MCF 10A (cell line): ENCODE measurements at regions of chr10 and their contacts with region 1.

Region 1: DNA sequence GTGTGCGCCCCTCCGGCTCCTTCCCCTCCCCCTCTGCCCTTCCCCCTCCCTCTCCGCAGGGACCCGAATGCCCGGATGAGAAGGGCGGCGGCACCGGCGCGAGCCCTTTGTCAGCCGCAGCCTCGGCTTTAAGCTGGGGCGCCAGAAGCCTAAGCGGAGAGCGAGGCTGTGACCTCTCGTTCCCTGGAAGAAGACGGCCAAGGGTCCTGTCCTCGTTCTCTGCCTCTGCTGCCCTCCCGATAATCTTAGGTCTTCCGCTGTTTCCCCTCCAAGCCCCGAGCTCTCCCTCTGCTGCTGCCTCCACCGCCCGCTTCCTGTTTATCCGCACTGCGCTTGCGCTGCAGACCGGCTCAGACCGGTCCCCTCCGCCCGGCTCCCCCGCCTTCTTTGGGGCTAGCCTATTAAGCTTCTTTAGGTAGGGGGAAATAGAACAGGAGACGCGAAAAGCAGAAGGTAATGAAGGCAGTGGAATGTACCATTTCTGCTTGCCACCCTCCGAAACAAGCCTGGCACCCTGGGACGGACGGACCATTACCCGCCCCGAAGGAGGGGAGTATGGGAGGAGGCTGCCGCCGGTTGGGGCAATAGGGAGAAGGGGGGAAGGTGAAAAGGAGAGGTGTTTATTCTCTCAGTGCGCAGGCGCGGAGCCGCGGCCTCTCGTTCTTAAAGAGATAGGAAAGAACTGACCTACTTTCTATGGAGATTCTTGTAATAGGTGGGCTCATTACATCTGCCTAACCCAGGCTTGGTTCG is at the start of gene OGA:
- DNase-seq: peak; percentile 99
- H3K4me3 Mint-ChIP-seq: peak within 1 kb of the TSS; percentile 84
- H3K27ac Mint-ChIP-seq: peak within 1 kb of the TSS; percentile 89
- H3K4me1 Mint-ChIP-seq: peaks cover 16% of the 10 kb centered on the region
- H3K27me3 Mint-ChIP-seq: no peaks in the 10 kb centered on the region
- CTCF ChIP-seq: no peak
- total RNA-seq, gene OGA: 96.1 and 115 TPM in 2 replicates

Region 2: GRCh38 chr10:101782811-101783735 is 35.2 kb before region 1 on chr10 and contains the start of gene NPM3:
- CTCF ChIA-PET with region 1: interaction called, 7 read pairs
- POLR2A ChIA-PET with region 1: interaction called, 56 read pairs
- intact Hi-C with region 1: no loop called
- DNase-seq: peak; percentile 83
- H3K4me3 Mint-ChIP-seq: peak within 1 kb of the TSS; percentile 100
- H3K27ac Mint-ChIP-seq: peak within 1 kb of the TSS; percentile 98
- H3K4me1 Mint-ChIP-seq: peaks cover 28% of the 10 kb centered on the region
- H3K27me3 Mint-ChIP-seq: no peaks in the 10 kb centered on the region
- CTCF ChIP-seq: no peak
- total RNA-seq, gene NPM3: 120 and 163 TPM in 2 replicates

Region 3: DNA sequence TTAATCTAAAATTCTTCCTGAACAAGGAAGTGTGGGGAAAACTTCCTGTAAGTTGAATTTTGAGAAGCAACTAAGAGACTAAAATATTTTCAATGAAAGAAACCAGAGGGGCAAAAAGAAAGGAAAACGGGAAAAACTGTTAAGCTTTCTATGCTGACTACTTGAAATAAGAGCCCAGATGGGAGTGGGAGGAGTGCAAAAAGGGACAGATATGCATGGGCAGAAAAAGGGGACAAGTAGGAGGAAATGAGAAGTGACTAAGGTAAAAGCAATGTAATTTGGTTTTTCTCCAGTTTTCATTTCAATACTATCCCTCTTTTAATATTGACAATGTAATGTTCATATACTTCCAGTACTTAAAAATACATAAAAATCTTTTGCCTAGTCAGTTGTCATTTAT is 11.1 kb before region 1 on chr10:
- CTCF ChIA-PET with region 1: no interaction called
- POLR2A ChIA-PET with region 1: interaction called, 23 read pairs
- intact Hi-C with region 1: no loop called
- DNase-seq: no peak
- H3K4me3 Mint-ChIP-seq: no peak overlapping the region
- H3K27ac Mint-ChIP-seq: no peak overlapping the region
- H3K4me1 Mint-ChIP-seq: no peaks in the 10 kb centered on the region
- H3K27me3 Mint-ChIP-seq: no peaks in the 10 kb centered on the region
- CTCF ChIP-seq: no peak

Region 4: GRCh38 chr10:101840741-101841453 is 22.6 kb after region 1 on chr10:
- CTCF ChIA-PET with region 1: interaction called, 16 read pairs
- POLR2A ChIA-PET with region 1: interaction called, 16 read pairs
- intact Hi-C with region 1: no loop called
- DNase-seq: peak; percentile 79
- H3K4me3 Mint-ChIP-seq: peak overlapping the region; percentile 57
- H3K27ac Mint-ChIP-seq: no peak overlapping the region
- H3K4me1 Mint-ChIP-seq: peaks cover 15% of the 10 kb centered on the region
- H3K27me3 Mint-ChIP-seq: no peaks in the 10 kb centered on the region
- CTCF ChIP-seq: peak; percentile 85

Region 5: GRCh38 chr10:101879456-101880231 is 61.3 kb after region 1 on chr10:
- CTCF ChIA-PET with region 1: no interaction called
- POLR2A ChIA-PET with region 1: no interaction called
- intact Hi-C with region 1: no loop called
- DNase-seq: peak; percentile 53
- H3K4me3 Mint-ChIP-seq: no peak overlapping the region
- H3K27ac Mint-ChIP-seq: no peak overlapping the region
- H3K4me1 Mint-ChIP-seq: peaks cover 6% of the 10 kb centered on the region
- H3K27me3 Mint-ChIP-seq: no peaks in the 10 kb centered on the region
- CTCF ChIP-seq: no peak

Region 6: GRCh38 chr10:102064868-102065560 is 246.7 kb after region 1 on chr10 and contains the start of gene HPS6:
- CTCF ChIA-PET with region 1: no interaction called
- POLR2A ChIA-PET with region 1: interaction called, 9 read pairs
- intact Hi-C with region 1: loop called (anchors 1 kb)
- DNase-seq: peak; percentile 93
- H3K4me3 Mint-ChIP-seq: peak within 1 kb of the TSS; percentile 83
- H3K27ac Mint-ChIP-seq: peak within 1 kb of the TSS; percentile 83
- H3K4me1 Mint-ChIP-seq: peaks cover 16% of the 10 kb centered on the region
- H3K27me3 Mint-ChIP-seq: no peaks in the 10 kb centered on the region
- CTCF ChIP-seq: no peak
- total RNA-seq, gene HPS6: 15.0 and 16.6 TPM in 2 replicates